Ascending aorta (tissue), 2 donors: ENCODE measurements at regions of chr6 and their contacts with region 1.

Region 1: GRCh38 chr6:32108094-32108627 is 977 bp downstream of the TNXB start:
- DNase-seq: peak in 1 of 2 donors; percentile 85
- H3K4me3 ChIP-seq: peak overlapping the region; percentile 34 to 58
- H3K27ac ChIP-seq: peak overlapping the region; percentile 68 to 81
- H3K4me1 ChIP-seq: peaks cover 14 to 51% of the 10 kb centered on the region in 2 donors
- H3K27me3 ChIP-seq: no peaks in the 10 kb centered on the region
- CTCF ChIP-seq: no peak

Region 2: GRCh38 chr6:32092760-32093497 is 15.2 kb before region 1 on chr6:
- intact Hi-C with region 1: loop called (anchors 1 kb)
- DNase-seq: no peak
- H3K4me3 ChIP-seq: peak overlapping the region in 1 of 2 donors; percentile 26
- H3K27ac ChIP-seq: peak overlapping the region; percentile 66 to 79
- H3K4me1 ChIP-seq: peaks cover 8 to 28% of the 10 kb centered on the region in 2 donors
- H3K27me3 ChIP-seq: no peaks in the 10 kb centered on the region
- CTCF ChIP-seq: no peak